OCI-LY7 (cell line): ENCODE measurements at regions of chr17 and their contacts with region 1.

Region 1: GRCh38 chr17:76053246-76054116 is 18.8 kb downstream of the SRP68 start:
- DNase-seq: no peak
- H3K4me3 ChIP-seq: no peak overlapping the region
- H3K27ac ChIP-seq: no peak overlapping the region
- H3K4me1 ChIP-seq: peaks cover 19% of the 10 kb centered on the region
- CTCF ChIP-seq: no peak

Region 2: DNA sequence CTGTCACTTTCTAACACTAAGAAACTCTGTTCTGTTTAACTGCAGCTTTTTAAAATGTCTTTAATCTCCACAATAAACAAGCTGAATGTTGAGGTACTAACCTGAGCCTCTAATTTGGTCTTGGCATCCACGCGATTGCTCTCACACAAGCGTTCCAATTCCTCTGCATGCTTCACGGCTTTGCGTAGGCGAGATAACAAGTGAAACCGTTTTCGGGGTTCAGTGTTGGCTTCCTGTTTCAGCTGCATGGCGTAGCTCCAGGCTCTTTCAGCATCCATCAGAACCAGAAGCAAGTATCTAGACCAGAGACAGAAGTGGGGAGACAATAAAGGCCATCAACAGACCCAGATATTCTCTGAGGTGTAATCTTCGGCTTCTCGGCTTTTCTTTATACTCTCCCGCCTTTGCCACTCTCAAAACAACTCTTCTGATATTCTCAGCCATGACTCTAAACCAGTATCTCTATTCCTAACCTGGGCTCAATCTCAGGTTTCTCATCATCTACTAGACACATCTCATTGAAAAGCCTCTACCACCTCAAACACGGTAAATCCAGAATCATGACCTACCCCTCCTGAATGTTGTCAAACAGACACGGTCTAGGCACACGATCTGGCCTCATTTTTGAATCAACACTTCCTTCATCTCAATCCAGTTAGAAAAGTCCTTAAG is 10.5 kb after region 1 on chr17:
- CTCF ChIA-PET with region 1: no interaction called
- POLR2A ChIA-PET with region 1: interaction called, 11 read pairs
- intact Hi-C with region 1: no loop called
- DNase-seq: no peak
- H3K4me3 ChIP-seq: no peak overlapping the region
- H3K27ac ChIP-seq: peak overlapping the region; percentile 36
- H3K4me1 ChIP-seq: peaks cover 12% of the 10 kb centered on the region
- CTCF ChIP-seq: no peak